ENCODE measurements at regions of chr15 and their contacts with region 1.

Region 1: GRCh38 chr15:57527382-57528091 is 64.2 kb upstream of the MYZAP start:
- DNase-seq: peak; percentile 88
- ATAC-seq: peak; percentile 99
- H3K4me3 ChIP-seq: no peak overlapping the region
- H3K4me3 Mint-ChIP-seq: no peak overlapping the region
- H3K27ac ChIP-seq: no peak overlapping the region
- H3K27ac Mint-ChIP-seq: no peak overlapping the region
- H3K4me1 ChIP-seq: peaks cover 6 to 10% of the 10 kb centered on the region in 2 donors
- H3K4me1 Mint-ChIP-seq: peaks cover 15% of the 10 kb centered on the region
- H3K27me3 ChIP-seq: no peaks in the 10 kb centered on the region
- H3K27me3 Mint-ChIP-seq: no peaks in the 10 kb centered on the region
- CTCF ChIP-seq: peak; percentile 80

Region 2: DNA sequence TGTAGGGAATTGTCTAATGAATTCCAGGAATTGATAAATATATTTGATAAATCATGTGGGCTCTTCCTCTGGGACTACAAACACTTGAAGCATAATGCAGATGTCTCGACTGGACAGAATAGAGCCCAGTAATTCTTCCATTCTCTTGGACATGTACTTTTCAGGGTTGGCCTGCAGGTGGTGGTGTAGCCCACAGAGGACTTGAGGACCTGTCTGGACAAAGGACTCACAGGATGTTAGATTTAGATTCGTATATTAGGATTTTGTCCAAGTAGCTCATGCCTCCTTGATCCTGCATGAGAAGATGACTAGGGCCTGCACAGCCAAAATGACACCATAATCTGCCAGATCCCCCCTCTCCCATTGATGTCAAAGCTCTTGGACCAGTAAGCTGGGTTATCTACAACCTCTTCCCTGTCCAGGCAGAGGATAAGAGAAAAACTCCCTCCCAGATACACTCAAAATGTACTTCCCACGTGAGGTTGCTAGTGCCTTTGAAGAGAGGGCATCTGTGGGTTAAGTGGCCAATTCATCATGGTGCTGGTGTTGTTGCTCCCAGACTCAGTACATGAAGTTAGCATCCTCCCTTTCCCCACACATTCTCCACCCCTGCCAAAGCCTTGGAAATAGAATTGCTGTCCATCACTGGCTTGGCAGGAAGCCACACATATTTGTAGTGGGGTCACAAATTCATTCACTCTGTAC is 705.7 kb before region 1 on chr15:
- CTCF ChIA-PET with region 1: interaction called, 16 read pairs
- POLR2A ChIA-PET with region 1: no interaction called
- intact Hi-C with region 1: loop called (anchors 1 kb)
- DNase-seq: peak; percentile 39
- ATAC-seq: peak; percentile 60
- H3K4me3 ChIP-seq: no peak overlapping the region
- H3K4me3 Mint-ChIP-seq: no peak overlapping the region
- H3K27ac ChIP-seq: no peak overlapping the region
- H3K27ac Mint-ChIP-seq: no peak overlapping the region
- H3K4me1 ChIP-seq: no peaks in the 10 kb centered on the region
- H3K4me1 Mint-ChIP-seq: peaks cover 4% of the 10 kb centered on the region
- H3K27me3 ChIP-seq: no peaks in the 10 kb centered on the region
- H3K27me3 Mint-ChIP-seq: no peaks in the 10 kb centered on the region
- CTCF ChIP-seq: peak; percentile 60

Region 3: GRCh38 chr15:57017024-57017423 is 510.5 kb before region 1 on chr15:
- CTCF ChIA-PET with region 1: no interaction called
- POLR2A ChIA-PET with region 1: no interaction called
- intact Hi-C with region 1: loop called (anchors 1 kb)
- DNase-seq: peak; percentile 13
- ATAC-seq: peak; percentile 33
- H3K4me3 ChIP-seq: no peak overlapping the region
- H3K4me3 Mint-ChIP-seq: no peak overlapping the region
- H3K27ac ChIP-seq: no peak overlapping the region
- H3K27ac Mint-ChIP-seq: no peak overlapping the region
- H3K4me1 ChIP-seq: no peaks in the 10 kb centered on the region
- H3K4me1 Mint-ChIP-seq: peaks cover 16% of the 10 kb centered on the region
- H3K27me3 ChIP-seq: no peaks in the 10 kb centered on the region
- H3K27me3 Mint-ChIP-seq: no peaks in the 10 kb centered on the region
- CTCF ChIP-seq: no peak

Region 4: GRCh38 chr15:57090496-57090859 is 437.1 kb before region 1 on chr15:
- CTCF ChIA-PET with region 1: no interaction called
- POLR2A ChIA-PET with region 1: no interaction called
- intact Hi-C with region 1: no loop called
- DNase-seq: no peak
- ATAC-seq: no peak
- H3K4me3 ChIP-seq: no peak overlapping the region
- H3K4me3 Mint-ChIP-seq: no peak overlapping the region
- H3K27ac ChIP-seq: no peak overlapping the region
- H3K27ac Mint-ChIP-seq: no peak overlapping the region
- H3K4me1 ChIP-seq: no peaks in the 10 kb centered on the region
- H3K4me1 Mint-ChIP-seq: peaks cover 20% of the 10 kb centered on the region
- H3K27me3 ChIP-seq: no peaks in the 10 kb centered on the region
- H3K27me3 Mint-ChIP-seq: no peaks in the 10 kb centered on the region
- CTCF ChIP-seq: no peak

Region 5: GRCh38 chr15:57213862-57214261 is 313.7 kb before region 1 on chr15:
- CTCF ChIA-PET with region 1: interaction called, 3 read pairs
- POLR2A ChIA-PET with region 1: no interaction called
- intact Hi-C with region 1: loop called (anchors 1 kb)
- DNase-seq: peak; percentile 57
- ATAC-seq: peak; percentile 39
- H3K4me3 ChIP-seq: no peak overlapping the region
- H3K4me3 Mint-ChIP-seq: no peak overlapping the region
- H3K27ac ChIP-seq: no peak overlapping the region
- H3K27ac Mint-ChIP-seq: peak overlapping the region; percentile 0
- H3K4me1 ChIP-seq: peaks cover 7 to 18% of the 10 kb centered on the region in 2 donors
- H3K4me1 Mint-ChIP-seq: peaks cover 31% of the 10 kb centered on the region
- H3K27me3 ChIP-seq: no peaks in the 10 kb centered on the region
- H3K27me3 Mint-ChIP-seq: no peaks in the 10 kb centered on the region
- CTCF ChIP-seq: peak; percentile 54

Region 6: GRCh38 chr15:57505949-57506391 is 21.6 kb before region 1 on chr15:
- CTCF ChIA-PET with region 1: interaction called, 18 read pairs
- POLR2A ChIA-PET with region 1: no interaction called
- intact Hi-C with region 1: no loop called
- DNase-seq: no peak
- ATAC-seq: no peak
- H3K4me3 ChIP-seq: no peak overlapping the region
- H3K4me3 Mint-ChIP-seq: no peak overlapping the region
- H3K27ac ChIP-seq: no peak overlapping the region
- H3K27ac Mint-ChIP-seq: no peak overlapping the region
- H3K4me1 ChIP-seq: peaks cover 27 to 28% of the 10 kb centered on the region in 2 donors
- H3K4me1 Mint-ChIP-seq: peaks cover 34% of the 10 kb centered on the region
- H3K27me3 ChIP-seq: peaks cover 0 to 3% (median 0%) of the 10 kb centered on the region in 4 experiments
- H3K27me3 Mint-ChIP-seq: peaks cover 2% of the 10 kb centered on the region
- CTCF ChIP-seq: no peak

Region 7: GRCh38 chr15:57561041-57561711 is 33.6 kb after region 1 on chr15:
- CTCF ChIA-PET with region 1: interaction called, 23 read pairs
- POLR2A ChIA-PET with region 1: no interaction called
- intact Hi-C with region 1: no loop called
- DNase-seq: peak; percentile 83
- ATAC-seq: peak; percentile 85
- H3K4me3 ChIP-seq: peak overlapping the region in 4 of 5 experiments; percentile 6 to 37 (median 32)
- H3K4me3 Mint-ChIP-seq: peak overlapping the region; percentile 76
- H3K27ac ChIP-seq: no peak overlapping the region
- H3K27ac Mint-ChIP-seq: peak overlapping the region; percentile 62
- H3K4me1 ChIP-seq: peaks cover 29 to 31% of the 10 kb centered on the region in 2 donors
- H3K4me1 Mint-ChIP-seq: peaks cover 35% of the 10 kb centered on the region
- H3K27me3 ChIP-seq: no peaks in the 10 kb centered on the region
- H3K27me3 Mint-ChIP-seq: peaks cover 1% of the 10 kb centered on the region
- CTCF ChIP-seq: peak; percentile 94

Region 8: GRCh38 chr15:57647791-57648130 is 120.2 kb after region 1 on chr15:
- CTCF ChIA-PET with region 1: no interaction called
- POLR2A ChIA-PET with region 1: no interaction called
- intact Hi-C with region 1: no loop called
- DNase-seq: no peak
- ATAC-seq: no peak
- H3K4me3 ChIP-seq: no peak overlapping the region
- H3K4me3 Mint-ChIP-seq: no peak overlapping the region
- H3K27ac ChIP-seq: no peak overlapping the region
- H3K27ac Mint-ChIP-seq: peak overlapping the region; percentile 4
- H3K4me1 ChIP-seq: peaks cover 16 to 26% of the 10 kb centered on the region in 2 donors
- H3K4me1 Mint-ChIP-seq: peaks cover 13% of the 10 kb centered on the region
- H3K27me3 ChIP-seq: no peaks in the 10 kb centered on the region
- H3K27me3 Mint-ChIP-seq: peaks cover 5% of the 10 kb centered on the region
- CTCF ChIP-seq: no peak